ENCODE measurements at regions of chr1 and their contacts with region 1.

Region 1: DNA sequence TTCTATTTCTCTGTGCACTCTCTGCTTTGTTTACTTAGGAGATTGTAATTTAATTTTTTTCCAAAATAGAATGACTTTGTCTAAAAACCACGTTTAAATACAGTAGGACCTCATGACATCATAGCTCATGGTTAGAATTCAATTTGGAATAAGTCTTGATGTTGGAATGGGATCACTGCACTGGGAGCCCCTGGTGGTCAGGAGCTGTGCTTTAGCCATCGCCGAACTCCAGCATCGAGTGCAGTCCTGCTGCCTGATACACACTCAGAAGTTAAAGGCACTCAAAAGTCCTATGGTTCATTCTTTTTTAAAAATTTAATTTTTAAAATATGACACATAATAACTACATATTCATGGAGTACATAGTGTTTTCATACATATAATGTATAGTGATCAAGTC is 75.1 kb downstream of the TEX35 start:
- DNase-seq: no peak
- ATAC-seq: peak; percentile 50; the same call in 1 of the 2 replicates
- H3K4me3 Mint-ChIP-seq: no peak overlapping the region
- H3K27ac Mint-ChIP-seq: no peak overlapping the region
- H3K4me1 Mint-ChIP-seq: peaks cover 11% of the 10 kb centered on the region
- H3K27me3 Mint-ChIP-seq: peaks cover 31% of the 10 kb centered on the region
- CTCF ChIP-seq: no peak

Region 2: GRCh38 chr1:178354816-178355215 is 233.2 kb before region 1 on chr1:
- CTCF ChIA-PET with region 1: no interaction called
- POLR2A ChIA-PET with region 1: no interaction called
- DNase-seq: no peak
- ATAC-seq: no peak
- H3K4me3 Mint-ChIP-seq: no peak overlapping the region
- H3K27ac Mint-ChIP-seq: no peak overlapping the region
- H3K4me1 Mint-ChIP-seq: peaks cover 7% of the 10 kb centered on the region; the same call in 1 of the 2 replicates
- H3K27me3 Mint-ChIP-seq: no peaks in the 10 kb centered on the region
- CTCF ChIP-seq: no peak

Region 3: DNA sequence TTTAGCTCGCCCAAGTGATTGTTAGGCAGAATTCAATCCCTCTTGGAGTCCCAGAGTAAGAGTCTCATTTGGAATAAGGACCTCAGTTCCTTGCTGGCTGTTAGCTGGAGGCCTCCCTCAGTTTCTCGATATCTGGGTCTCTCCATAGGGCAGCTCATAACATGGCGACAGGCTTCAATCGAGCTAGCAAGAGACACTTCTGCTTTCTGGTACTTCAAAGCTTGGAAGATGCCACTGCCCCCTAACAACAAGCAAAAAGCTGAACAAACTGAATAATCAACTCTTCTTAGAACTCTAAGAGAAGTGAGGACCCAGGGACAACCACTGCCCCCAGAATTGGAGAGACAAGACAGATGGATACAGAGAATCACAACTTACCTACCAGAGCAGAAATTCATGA is 11.1 kb after region 1 on chr1:
- CTCF ChIA-PET with region 1: interaction called, 13 read pairs
- POLR2A ChIA-PET with region 1: no interaction called
- DNase-seq: no peak
- ATAC-seq: no peak
- H3K4me3 Mint-ChIP-seq: no peak overlapping the region
- H3K27ac Mint-ChIP-seq: no peak overlapping the region
- H3K4me1 Mint-ChIP-seq: no peaks in the 10 kb centered on the region; the same call in 1 of the 2 replicates
- H3K27me3 Mint-ChIP-seq: no peaks in the 10 kb centered on the region
- CTCF ChIP-seq: no peak